Activated CD4-positive, alpha-beta memory T cell treated with anti-CD3 and anti-CD28 coated beads for 36 hours (primary cell): ENCODE measurements at regions of chr3 and their contacts with region 1.

Region 1: GRCh38 chr3:133448478-133449122 is 48.7 kb downstream of the BFSP2 start:
- DNase-seq: peak; percentile 86
- H3K4me3 Mint-ChIP-seq: no peak overlapping the region
- H3K27ac Mint-ChIP-seq: peak overlapping the region; percentile 76
- H3K4me1 Mint-ChIP-seq: peaks cover 39% of the 10 kb centered on the region
- H3K27me3 Mint-ChIP-seq: no peaks in the 10 kb centered on the region

Region 2: GRCh38 chr3:133459400-133459799 is 10.8 kb after region 1 on chr3:
- CTCF ChIA-PET with region 1: interaction called, 12 read pairs
- POLR2A ChIA-PET with region 1: no interaction called
- intact Hi-C with region 1: loop called (anchors 2 kb)
- DNase-seq: no peak
- H3K4me3 Mint-ChIP-seq: no peak overlapping the region
- H3K27ac Mint-ChIP-seq: no peak overlapping the region
- H3K4me1 Mint-ChIP-seq: peaks cover 16% of the 10 kb centered on the region
- H3K27me3 Mint-ChIP-seq: no peaks in the 10 kb centered on the region

Region 3: DNA sequence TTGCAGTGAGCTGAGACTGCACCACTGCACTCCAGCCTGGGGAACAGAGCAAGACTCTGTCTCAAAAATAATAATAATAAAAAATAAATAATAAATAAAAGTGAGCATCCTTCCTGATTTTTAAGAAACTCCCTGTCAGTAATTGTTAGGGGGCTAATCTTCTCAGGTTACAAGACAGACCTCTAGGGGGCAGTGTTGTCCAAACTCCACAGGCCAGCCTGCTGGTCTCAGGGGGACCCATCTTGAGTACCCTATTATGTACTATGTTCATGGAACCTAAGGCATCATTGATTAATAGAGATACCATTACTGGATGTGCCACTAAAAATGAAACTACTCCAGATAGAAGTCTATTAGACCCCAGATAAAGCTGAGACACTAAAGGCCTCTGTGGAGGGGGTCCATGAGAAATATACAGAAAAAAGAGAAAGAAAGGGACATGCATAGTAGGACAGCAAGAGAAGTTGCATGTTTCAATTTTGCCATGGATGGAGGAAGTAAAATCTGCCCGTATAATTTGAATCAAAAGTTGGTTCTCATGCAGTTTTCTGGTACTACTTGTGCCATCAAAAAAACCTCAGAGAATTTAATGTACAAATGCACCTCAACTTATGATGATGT is 39.4 kb after region 1 on chr3:
- CTCF ChIA-PET with region 1: interaction called, 16 read pairs
- POLR2A ChIA-PET with region 1: interaction called, 4 read pairs
- intact Hi-C with region 1: loop called (anchors 1 kb)
- DNase-seq: peak; percentile 61
- H3K4me3 Mint-ChIP-seq: no peak overlapping the region
- H3K27ac Mint-ChIP-seq: no peak overlapping the region
- H3K4me1 Mint-ChIP-seq: peaks cover 48% of the 10 kb centered on the region
- H3K27me3 Mint-ChIP-seq: no peaks in the 10 kb centered on the region

Region 4: DNA sequence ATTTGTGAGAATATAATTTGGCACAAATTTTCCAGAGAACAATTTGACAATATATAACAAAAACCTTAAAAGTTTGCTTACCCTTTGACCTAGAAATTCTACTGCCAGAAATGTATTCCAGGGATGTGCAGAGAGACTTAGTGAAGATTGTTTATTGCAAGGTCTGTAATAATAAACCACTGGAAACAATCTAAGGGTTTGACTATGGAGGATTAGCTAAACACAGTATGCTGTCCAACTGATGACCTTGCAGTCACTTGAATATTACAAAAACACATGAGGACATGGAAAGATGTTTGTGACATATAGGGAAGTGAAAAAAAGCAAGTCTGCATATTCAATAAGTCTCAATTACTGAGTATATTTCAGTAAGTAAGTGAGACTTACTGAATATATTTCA is 76.8 kb after region 1 on chr3:
- CTCF ChIA-PET with region 1: no interaction called
- POLR2A ChIA-PET with region 1: no interaction called
- intact Hi-C with region 1: no loop called
- DNase-seq: no peak
- H3K4me3 Mint-ChIP-seq: no peak overlapping the region
- H3K27ac Mint-ChIP-seq: no peak overlapping the region
- H3K4me1 Mint-ChIP-seq: no peaks in the 10 kb centered on the region
- H3K27me3 Mint-ChIP-seq: no peaks in the 10 kb centered on the region

Region 5: GRCh38 chr3:133661454-133662277 is 213.1 kb after region 1 on chr3 and contains the start of gene TOPBP1:
- CTCF ChIA-PET with region 1: no interaction called
- POLR2A ChIA-PET with region 1: no interaction called
- intact Hi-C with region 1: loop called (anchors 2 kb)
- DNase-seq: peak; percentile 94
- H3K4me3 Mint-ChIP-seq: peak within 1 kb of the TSS; percentile 98
- H3K27ac Mint-ChIP-seq: peak within 1 kb of the TSS; percentile 98
- H3K4me1 Mint-ChIP-seq: peaks cover 32% of the 10 kb centered on the region
- H3K27me3 Mint-ChIP-seq: no peaks in the 10 kb centered on the region
- total RNA-seq, gene TOPBP1: 73.9 to 79.1 TPM

Region 6: DNA sequence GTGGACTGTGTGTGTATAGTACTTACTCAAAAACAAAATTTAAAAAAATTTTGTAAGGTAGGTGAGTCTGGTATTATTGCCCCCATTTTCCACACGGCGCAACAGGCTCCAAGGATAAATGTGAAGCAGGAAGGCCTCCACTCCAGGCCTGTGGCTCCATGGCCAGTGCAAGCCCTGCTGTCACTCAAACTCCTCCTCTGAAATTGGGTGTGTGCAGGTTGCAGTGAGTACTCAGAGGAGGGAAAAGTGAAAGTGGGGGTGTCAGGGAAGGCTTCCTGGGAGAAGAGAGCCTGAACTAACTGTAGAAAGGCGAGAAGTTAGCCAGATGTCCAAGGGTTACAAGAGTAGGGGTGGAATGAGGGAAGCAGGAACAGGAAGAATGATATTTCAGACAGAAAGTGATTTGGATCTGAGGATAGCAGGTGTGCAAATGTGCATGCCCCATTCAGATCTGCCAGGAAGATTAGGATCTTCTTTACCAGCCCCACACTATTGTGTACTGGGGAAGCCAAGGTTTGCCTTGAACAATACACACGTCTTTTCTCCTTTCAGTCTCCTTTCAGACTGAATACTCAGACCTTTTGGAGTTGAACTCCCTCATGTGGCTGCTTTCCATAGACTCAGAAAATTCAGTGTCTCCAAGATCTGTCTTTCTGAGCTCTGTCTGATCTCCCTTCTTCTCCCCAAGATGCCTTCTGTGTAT is 850.7 kb after region 1 on chr3:
- CTCF ChIA-PET with region 1: no interaction called
- POLR2A ChIA-PET with region 1: no interaction called
- intact Hi-C with region 1: loop called (anchors 5 kb)
- DNase-seq: no peak
- H3K4me3 Mint-ChIP-seq: no peak overlapping the region
- H3K27ac Mint-ChIP-seq: no peak overlapping the region
- H3K4me1 Mint-ChIP-seq: no peaks in the 10 kb centered on the region
- H3K27me3 Mint-ChIP-seq: peaks cover 21% of the 10 kb centered on the region